ENCODE measurements at regions of chr15 and their contacts with region 1.

Region 1: GRCh38 chr15:90529371-90530249 is at the start of gene CRTC3:
- DNase-seq: peak; percentile 73

Region 2: GRCh38 chr15:90539789-90540188 is 10.2 kb after region 1 on chr15:
- CTCF ChIA-PET with region 1: interaction called, 4 read pairs
- POLR2A ChIA-PET with region 1: interaction called, 16 read pairs
- DNase-seq: no peak

Region 3: GRCh38 chr15:90648137-90649070 is 118.8 kb after region 1 on chr15:
- CTCF ChIA-PET with region 1: no interaction called
- POLR2A ChIA-PET with region 1: no interaction called
- DNase-seq: peak; percentile 79